ENCODE measurements at regions of chr22 and their contacts with region 1.

Region 1: GRCh38 chr22:50474668-50475492 is at the start of gene SBF1:
- DNase-seq: peak; percentile 87
- ATAC-seq: peak; percentile 91
- H3K4me3 ChIP-seq: peak within 1 kb of the TSS; percentile 84
- H3K27ac ChIP-seq: no peak within 1 kb of the TSS
- H3K4me1 ChIP-seq: peaks cover 29% of the 10 kb centered on the region
- H3K27me3 ChIP-seq: no peaks in the 10 kb centered on the region
- CTCF ChIP-seq: no peak
- total RNA-seq, gene SBF1: 48.5 and 67.1 TPM in 2 replicates

Region 2: GRCh38 chr22:50444663-50445062 is 30.2 kb before region 1 on chr22:
- CTCF ChIA-PET with region 1: no interaction called
- POLR2A ChIA-PET with region 1: interaction called, 12 read pairs
- intact Hi-C with region 1: no loop called
- DNase-seq: peak; percentile 38
- ATAC-seq: peak; percentile 27
- H3K4me3 ChIP-seq: no peak overlapping the region
- H3K27ac ChIP-seq: no peak overlapping the region
- H3K4me1 ChIP-seq: no peaks in the 10 kb centered on the region
- H3K27me3 ChIP-seq: no peaks in the 10 kb centered on the region
- CTCF ChIP-seq: no peak

Region 3: GRCh38 chr22:50606165-50606945 is 131.5 kb after region 1 on chr22:
- CTCF ChIA-PET with region 1: no interaction called
- POLR2A ChIA-PET with region 1: no interaction called
- intact Hi-C with region 1: no loop called
- DNase-seq: no peak
- ATAC-seq: no peak
- H3K4me3 ChIP-seq: no peak overlapping the region
- H3K27ac ChIP-seq: no peak overlapping the region
- H3K4me1 ChIP-seq: no peaks in the 10 kb centered on the region
- H3K27me3 ChIP-seq: no peaks in the 10 kb centered on the region
- CTCF ChIP-seq: no peak

Measured in PC-3 (cell line).